ENCODE measurements at regions of chr14 and their contacts with region 1.

Region 1: GRCh38 chr14:104665657-104666522 is 23.5 kb upstream of the INF2 start:
- DNase-seq: no peak
- ATAC-seq: peak; percentile 72
- H3K4me3 Mint-ChIP-seq: no peak overlapping the region
- H3K27ac Mint-ChIP-seq: no peak overlapping the region
- H3K4me1 Mint-ChIP-seq: peaks cover 15% of the 10 kb centered on the region
- H3K27me3 Mint-ChIP-seq: peaks cover 1% of the 10 kb centered on the region
- CTCF ChIP-seq: no peak

Region 2: GRCh38 chr14:104650057-104650981 is 15.6 kb before region 1 on chr14:
- CTCF ChIA-PET with region 1: interaction called, 13 read pairs
- POLR2A ChIA-PET with region 1: no interaction called
- DNase-seq: peak; percentile 87
- ATAC-seq: peak; percentile 90
- H3K4me3 Mint-ChIP-seq: peak overlapping the region; percentile 78
- H3K27ac Mint-ChIP-seq: no peak overlapping the region
- H3K4me1 Mint-ChIP-seq: no peaks in the 10 kb centered on the region
- H3K27me3 Mint-ChIP-seq: peaks cover 38% of the 10 kb centered on the region
- CTCF ChIP-seq: peak; percentile 99

Region 3: DNA sequence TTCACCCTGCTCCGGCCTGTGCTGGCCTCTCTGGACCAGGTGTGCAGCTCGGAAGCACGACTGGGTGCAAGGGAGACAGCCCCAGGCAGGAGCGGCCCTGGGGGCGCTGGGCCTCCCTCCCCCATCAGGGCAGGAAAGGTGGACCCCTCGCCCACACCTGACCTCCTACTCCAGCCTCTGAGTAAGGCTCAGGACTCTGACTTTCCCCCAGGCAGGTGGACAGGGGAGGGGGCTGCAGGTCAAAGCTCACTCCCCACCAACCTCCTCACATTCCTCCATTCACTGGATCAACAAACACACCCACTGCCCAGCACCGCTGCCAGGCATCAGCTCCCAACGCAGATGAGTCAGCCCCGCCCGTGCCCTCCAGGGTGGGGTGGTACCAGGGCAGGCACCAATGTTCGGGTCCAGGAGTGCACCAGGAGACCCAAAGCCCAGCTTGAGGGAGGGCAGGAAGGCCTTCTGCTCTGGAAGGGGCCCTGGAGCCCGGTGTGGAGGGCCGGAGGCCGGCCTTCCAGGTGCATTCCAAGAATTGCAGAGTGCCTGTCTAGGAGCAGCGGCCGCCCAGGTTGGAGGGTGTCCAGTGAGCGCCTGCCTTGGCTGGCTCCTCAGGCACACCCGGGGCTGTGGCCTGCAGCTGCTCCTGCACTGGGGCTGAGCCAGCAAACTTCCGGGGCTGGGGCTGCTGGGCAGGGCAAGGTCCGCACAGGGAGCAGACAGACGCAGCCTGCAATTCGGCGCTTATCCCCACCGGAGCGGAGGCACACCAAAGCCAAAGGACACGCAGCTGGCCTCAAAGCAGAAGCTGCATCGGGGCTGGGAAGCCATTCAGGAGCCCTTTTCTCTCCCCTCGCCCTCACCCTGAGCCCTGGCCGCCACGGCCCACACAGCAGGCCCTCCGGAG is 22.0 kb after region 1 on chr14:
- CTCF ChIA-PET with region 1: interaction called, 35 read pairs
- POLR2A ChIA-PET with region 1: interaction called, 4 read pairs
- DNase-seq: peak; percentile 64
- ATAC-seq: peak; percentile 33
- H3K4me3 Mint-ChIP-seq: peak overlapping the region; percentile 63
- H3K27ac Mint-ChIP-seq: peak overlapping the region; percentile 76; the same call in 1 of the 2 replicates
- H3K4me1 Mint-ChIP-seq: peaks cover 42% of the 10 kb centered on the region
- H3K27me3 Mint-ChIP-seq: no peaks in the 10 kb centered on the region; the same call in 1 of the 2 replicates
- CTCF ChIP-seq: no peak

Region 4: GRCh38 chr14:104708606-104709268 is 42.8 kb after region 1 on chr14:
- CTCF ChIA-PET with region 1: interaction called, 14 read pairs
- POLR2A ChIA-PET with region 1: no interaction called
- DNase-seq: peak; percentile 90
- ATAC-seq: peak; percentile 91
- H3K4me3 Mint-ChIP-seq: no peak overlapping the region
- H3K27ac Mint-ChIP-seq: no peak overlapping the region
- H3K4me1 Mint-ChIP-seq: peaks cover 3% of the 10 kb centered on the region; the same call in 1 of the 2 replicates
- H3K27me3 Mint-ChIP-seq: no peaks in the 10 kb centered on the region
- CTCF ChIP-seq: peak; percentile 98

Region 5: DNA sequence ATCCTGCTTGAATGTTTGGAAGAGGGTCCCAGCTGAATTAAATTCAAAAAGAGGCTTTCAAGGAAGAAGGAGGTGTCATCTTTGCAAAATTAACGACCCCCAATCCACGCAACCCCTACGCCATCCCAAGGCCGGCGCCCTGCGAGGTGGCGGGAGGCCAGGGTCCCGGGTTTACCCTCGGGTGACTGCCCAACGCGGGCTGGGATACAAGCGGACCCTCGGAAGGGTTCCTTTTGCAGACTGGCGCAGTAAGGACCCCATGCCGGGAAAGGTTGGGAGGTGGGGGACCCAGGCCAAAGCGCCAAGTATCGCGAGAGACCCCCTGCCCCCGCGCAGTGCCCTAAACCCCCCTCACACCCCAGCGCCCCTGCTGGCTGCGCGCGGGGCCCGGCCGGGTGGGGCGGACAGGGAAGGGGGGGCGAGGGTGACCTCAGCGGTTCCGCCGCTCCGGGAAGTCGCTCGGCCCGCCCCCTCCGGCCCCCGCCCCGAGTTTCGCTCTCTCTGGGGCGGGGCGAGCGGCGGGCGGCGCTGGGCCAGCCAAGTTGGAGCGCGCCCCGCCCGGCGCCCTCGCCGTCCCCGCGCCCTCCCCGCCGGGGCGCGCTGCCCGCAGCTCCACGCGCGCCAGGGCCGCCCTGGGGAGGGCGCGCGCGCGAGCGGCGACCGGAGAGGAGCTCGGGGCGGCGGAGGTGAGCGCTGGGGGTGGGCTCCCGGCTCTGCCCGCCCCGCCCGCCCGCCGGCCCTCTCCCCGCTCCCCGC is 134.3 kb after region 1 on chr14:
- CTCF ChIA-PET with region 1: no interaction called
- POLR2A ChIA-PET with region 1: no interaction called
- DNase-seq: peak; percentile 70
- ATAC-seq: peak; percentile 21
- H3K4me3 Mint-ChIP-seq: peak overlapping the region; percentile 88
- H3K27ac Mint-ChIP-seq: peak overlapping the region; percentile 93
- H3K4me1 Mint-ChIP-seq: peaks cover 32% of the 10 kb centered on the region
- H3K27me3 Mint-ChIP-seq: peaks cover 65% of the 10 kb centered on the region
- CTCF ChIP-seq: no peak

Measured in WTC11 (cell line).